Dendritic cell treated with granulocyte-macrophage colony-stimulating factor and Interleukin-4, amounts not matched to agents 40 ng/mL and 50 ng/mL, for 4 days (primary cell): ENCODE measurements at regions of chr9 and their contacts with region 1.

Region 1: GRCh38 chr9:83707768-83708514 is at the start of gene UBQLN1:
- H3K4me3 Mint-ChIP-seq: peak within 1 kb of the TSS; percentile 97
- H3K27ac Mint-ChIP-seq: peak within 1 kb of the TSS; percentile 100
- H3K4me1 Mint-ChIP-seq: peaks cover 35% of the 10 kb centered on the region
- H3K27me3 Mint-ChIP-seq: no peaks in the 10 kb centered on the region

Region 2: DNA sequence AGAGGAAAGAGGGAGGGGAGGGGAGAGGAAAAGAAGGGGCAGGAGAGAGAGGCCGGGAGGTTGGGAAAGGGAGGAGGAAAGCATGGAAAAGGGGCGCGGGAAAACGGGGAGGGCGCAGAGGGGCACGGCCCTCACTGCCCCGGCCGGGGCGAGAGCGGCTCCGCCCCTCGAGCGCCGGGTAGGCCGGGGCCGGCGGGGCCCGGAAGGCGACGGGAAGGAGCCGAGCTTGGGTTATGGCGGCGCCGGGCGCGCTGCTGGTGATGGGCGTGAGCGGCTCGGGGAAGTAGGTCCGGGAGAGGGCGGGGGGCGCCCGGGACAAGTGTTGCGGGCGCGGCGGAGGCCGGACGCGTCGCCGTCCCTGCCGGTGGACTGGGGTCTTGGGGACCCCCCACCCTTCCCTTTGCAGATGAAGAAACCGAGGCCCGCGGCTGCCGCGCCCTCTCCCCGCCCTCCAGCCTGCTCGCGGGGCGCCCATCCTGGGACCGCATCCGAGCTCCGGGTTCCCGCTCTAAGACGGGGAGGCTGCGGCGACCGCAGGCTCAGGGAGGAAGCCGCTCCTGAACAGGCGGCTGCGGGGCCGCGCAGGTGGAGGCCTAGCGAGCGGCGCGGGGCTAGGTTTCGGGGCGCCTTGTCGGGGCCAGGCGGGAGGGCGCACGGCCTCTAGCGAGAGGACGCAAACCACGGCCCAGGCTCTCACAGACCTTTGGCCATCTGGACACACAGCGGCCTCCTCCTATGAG is 84.8 kb before region 1 on chr9 and contains the start of gene IDNK:
- intact Hi-C with region 1: loop called (anchors 5 kb)
- H3K4me3 Mint-ChIP-seq: peak within 1 kb of the TSS; percentile 89
- H3K27ac Mint-ChIP-seq: peak within 1 kb of the TSS; percentile 97
- H3K4me1 Mint-ChIP-seq: peaks cover 26% of the 10 kb centered on the region
- H3K27me3 Mint-ChIP-seq: peaks cover 6% of the 10 kb centered on the region

Region 3: GRCh38 chr9:83656032-83656680 is 51.8 kb before region 1 on chr9:
- intact Hi-C with region 1: loop called (anchors 5 kb)
- H3K4me3 Mint-ChIP-seq: no peak overlapping the region
- H3K27ac Mint-ChIP-seq: no peak overlapping the region
- H3K4me1 Mint-ChIP-seq: peaks cover 32% of the 10 kb centered on the region
- H3K27me3 Mint-ChIP-seq: no peaks in the 10 kb centered on the region

Region 4: DNA sequence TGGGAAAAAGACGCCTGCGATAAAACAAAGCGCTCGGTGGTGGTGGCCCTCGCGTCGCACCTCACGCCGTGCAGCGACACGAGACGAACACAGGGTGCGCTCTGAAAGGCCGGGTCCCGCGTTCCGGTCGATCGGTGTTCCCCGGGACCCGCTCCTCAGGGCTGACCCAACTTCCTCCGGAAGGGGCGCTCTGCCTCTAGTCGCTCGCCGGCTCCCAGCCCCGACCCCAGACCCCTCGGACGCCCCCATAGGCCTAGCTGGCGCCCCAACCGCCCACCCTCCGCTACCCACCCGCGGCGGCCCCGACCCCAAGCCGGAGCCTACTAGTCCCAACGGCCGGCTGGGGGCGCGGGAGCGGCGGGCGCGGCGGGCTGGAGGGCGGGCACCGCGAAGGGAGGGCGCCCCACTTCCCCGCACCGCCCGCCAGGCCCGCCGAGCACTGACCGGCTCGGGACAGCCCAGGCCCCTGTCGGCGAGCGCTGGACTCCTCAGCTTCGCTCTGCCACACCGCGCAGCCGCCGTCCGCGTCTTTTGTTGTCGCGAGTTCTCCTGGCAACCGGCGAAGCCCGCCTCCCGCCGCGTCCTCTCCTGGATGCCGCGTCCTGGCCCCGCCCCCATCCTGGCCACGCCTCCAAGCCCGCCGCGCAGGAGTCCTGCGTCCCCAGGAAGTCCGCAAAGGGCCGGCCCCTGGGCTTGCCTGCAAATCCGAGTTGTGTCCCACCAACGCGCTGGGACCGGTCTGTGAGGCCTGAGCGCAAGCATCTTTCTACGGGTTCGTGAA is 213.2 kb after region 1 on chr9 and contains the start of gene KIF27:
- intact Hi-C with region 1: loop called (anchors 2 kb)
- H3K4me3 Mint-ChIP-seq: peak within 1 kb of the TSS; percentile 79
- H3K27ac Mint-ChIP-seq: peak within 1 kb of the TSS; percentile 90
- H3K4me1 Mint-ChIP-seq: peaks cover 25% of the 10 kb centered on the region
- H3K27me3 Mint-ChIP-seq: no peaks in the 10 kb centered on the region